Astrocyte of the cerebellum (primary cell): ENCODE measurements at regions of chr7 and their contacts with region 1.

Region 1: GRCh38 chr7:69002416-69002815 is 595.9 kb upstream of the AUTS2 start:
- DNase-seq: peak; percentile 20
- H3K4me3 ChIP-seq: no peak overlapping the region
- CTCF ChIP-seq: no peak

Region 2: GRCh38 chr7:68925241-68925640 is 77.2 kb before region 1 on chr7:
- in situ Hi-C with region 1: no loop called
- DNase-seq: no peak
- H3K4me3 ChIP-seq: no peak overlapping the region
- CTCF ChIP-seq: no peak

Region 3: GRCh38 chr7:68936471-68936870 is 65.9 kb before region 1 on chr7:
- in situ Hi-C with region 1: no loop called
- DNase-seq: no peak
- H3K4me3 ChIP-seq: no peak overlapping the region
- CTCF ChIP-seq: no peak

Region 4: GRCh38 chr7:69067372-69067771 is 65.0 kb after region 1 on chr7:
- in situ Hi-C with region 1: loop called (anchors 10 kb)
- DNase-seq: no peak
- H3K4me3 ChIP-seq: no peak overlapping the region
- CTCF ChIP-seq: no peak

Region 5: DNA sequence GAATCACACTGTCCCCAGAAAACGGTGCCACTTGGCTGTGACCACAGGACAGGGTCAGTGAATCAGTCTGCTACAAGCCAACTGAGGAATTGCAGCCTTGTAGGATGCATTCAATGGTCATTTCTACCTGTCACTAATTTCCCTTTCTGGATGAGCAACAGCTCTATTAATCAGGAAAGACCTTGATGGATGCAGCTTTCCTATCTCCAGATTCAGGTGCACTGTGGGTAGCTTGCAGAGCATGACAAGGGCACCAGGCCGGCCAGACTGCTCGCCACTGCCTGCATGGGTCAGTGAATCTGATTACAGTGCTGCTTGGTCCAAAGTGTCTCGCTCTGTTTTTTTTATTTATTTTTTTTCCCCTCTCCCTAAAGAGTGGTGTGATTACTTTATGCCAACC is 89.1 kb after region 1 on chr7:
- in situ Hi-C with region 1: no loop called
- DNase-seq: no peak
- H3K4me3 ChIP-seq: no peak overlapping the region
- CTCF ChIP-seq: no peak